PC-9 (cell line): ENCODE measurements at regions of chr9 and their contacts with region 1.

Region 1: DNA sequence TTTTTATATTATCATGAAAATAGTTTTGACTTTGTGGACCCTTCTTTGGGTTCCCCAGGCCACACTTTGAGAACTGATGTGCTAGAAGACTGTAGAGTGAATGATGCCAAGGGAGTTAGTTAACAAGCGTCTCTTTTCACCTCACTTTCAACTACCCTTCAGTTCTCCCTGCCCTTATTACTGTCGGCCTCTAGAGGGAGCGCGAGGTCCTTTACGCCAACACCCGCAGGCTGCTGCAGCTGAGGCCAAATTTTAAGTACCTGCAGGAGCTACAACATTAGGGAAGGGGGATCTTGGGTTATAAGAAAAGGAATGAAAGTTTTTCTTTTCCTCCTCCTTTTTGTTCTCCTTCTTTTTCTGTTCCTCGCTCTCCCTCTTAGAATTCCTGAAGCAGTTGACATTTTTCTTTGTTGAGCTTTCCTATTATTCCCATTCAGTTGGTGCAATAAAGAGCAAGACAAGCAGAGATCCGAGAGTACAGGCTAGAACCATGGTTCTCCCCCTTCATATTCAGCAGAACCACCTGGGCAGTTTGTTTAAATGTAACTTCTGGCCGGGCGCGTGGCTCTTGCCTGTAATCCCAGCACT is 84.0 kb downstream of the ZFAND5 start:
- DNase-seq: peak; percentile 46 to 72
- H3K4me3 ChIP-seq: no peak overlapping the region
- H3K27ac ChIP-seq: no peak overlapping the region
- H3K4me1 ChIP-seq: no peaks in the 10 kb centered on the region
- H3K27me3 ChIP-seq: no peaks in the 10 kb centered on the region
- CTCF ChIP-seq: peak; percentile 96

Region 2: GRCh38 chr9:72173081-72173480 is 107.9 kb before region 1 on chr9:
- CTCF ChIA-PET with region 1: interaction called, 11 read pairs
- POLR2A ChIA-PET with region 1: no interaction called
- intact Hi-C with region 1: no loop called
- DNase-seq: no peak
- H3K4me3 ChIP-seq: no peak overlapping the region
- H3K27ac ChIP-seq: no peak overlapping the region
- H3K4me1 ChIP-seq: no peaks in the 10 kb centered on the region
- H3K27me3 ChIP-seq: no peaks in the 10 kb centered on the region
- CTCF ChIP-seq: no peak

Region 3: GRCh38 chr9:72473474-72474261 is 192.7 kb after region 1 on chr9:
- CTCF ChIA-PET with region 1: interaction called, 8 read pairs
- POLR2A ChIA-PET with region 1: no interaction called
- intact Hi-C with region 1: loop called (anchors 2 kb)
- DNase-seq: no peak
- H3K4me3 ChIP-seq: no peak overlapping the region
- H3K27ac ChIP-seq: no peak overlapping the region
- H3K4me1 ChIP-seq: peaks cover 31% of the 10 kb centered on the region
- H3K27me3 ChIP-seq: no peaks in the 10 kb centered on the region
- CTCF ChIP-seq: no peak

Region 4: GRCh38 chr9:72540348-72540873 is 259.4 kb after region 1 on chr9:
- CTCF ChIA-PET with region 1: interaction called, 4 read pairs
- POLR2A ChIA-PET with region 1: no interaction called
- intact Hi-C with region 1: loop called (anchors 5 kb)
- DNase-seq: peak; percentile 43 to 60
- H3K4me3 ChIP-seq: no peak overlapping the region
- H3K27ac ChIP-seq: peak overlapping the region; percentile 42
- H3K4me1 ChIP-seq: peaks cover 54% of the 10 kb centered on the region
- H3K27me3 ChIP-seq: no peaks in the 10 kb centered on the region
- CTCF ChIP-seq: no peak

Region 5: DNA sequence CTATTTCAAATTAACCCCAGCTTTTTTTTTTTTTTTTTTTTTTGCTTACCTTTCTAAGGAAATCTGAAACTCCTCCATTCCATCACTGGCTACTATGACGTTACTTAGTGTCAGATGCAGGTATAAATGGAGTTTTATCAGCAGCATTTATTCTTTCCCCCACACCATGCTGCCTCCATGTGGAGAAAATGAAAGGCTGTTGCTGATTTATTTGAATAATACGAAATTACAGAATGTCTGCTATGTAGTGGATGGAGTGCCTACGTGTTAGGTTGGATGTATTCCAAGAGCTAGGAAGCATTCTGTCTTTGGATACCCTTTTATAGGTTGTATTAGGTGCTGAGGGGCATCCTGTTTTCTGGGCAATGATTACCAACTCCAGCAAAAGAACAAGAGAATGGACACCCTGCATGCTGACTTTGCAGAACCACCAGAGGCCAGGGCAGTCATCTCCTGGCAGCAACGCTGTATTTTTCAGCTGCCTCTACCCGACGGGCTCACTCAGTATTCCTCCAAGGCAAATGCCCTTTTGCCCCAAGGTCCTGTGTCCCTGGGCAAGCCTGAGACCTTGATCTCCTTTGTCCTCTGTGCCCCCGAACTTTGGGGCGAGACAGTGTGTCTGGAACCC is 472.4 kb after region 1 on chr9:
- CTCF ChIA-PET with region 1: interaction called, 29 read pairs
- POLR2A ChIA-PET with region 1: no interaction called
- intact Hi-C with region 1: loop called (anchors 1 kb)
- DNase-seq: peak in 1 of 2 experiments; percentile 18
- H3K4me3 ChIP-seq: no peak overlapping the region
- H3K27ac ChIP-seq: no peak overlapping the region
- H3K4me1 ChIP-seq: no peaks in the 10 kb centered on the region
- H3K27me3 ChIP-seq: no peaks in the 10 kb centered on the region
- CTCF ChIP-seq: peak; percentile 49